ENCODE measurements at regions of chr6 and their contacts with region 1.

Region 1: GRCh38 chr6:118551063-118552053 is 3.3 kb downstream of the PLN start:
- DNase-seq: no peak
- ATAC-seq: peak; percentile 71 to 76 (median 74)
- H3K4me3 ChIP-seq: peak overlapping the region; percentile 68
- H3K27ac ChIP-seq: peak overlapping the region; percentile 87
- H3K4me1 ChIP-seq: peaks cover 39% of the 10 kb centered on the region
- H3K27me3 ChIP-seq: no peaks in the 10 kb centered on the region
- CTCF ChIP-seq: peak; percentile 63

Region 2: DNA sequence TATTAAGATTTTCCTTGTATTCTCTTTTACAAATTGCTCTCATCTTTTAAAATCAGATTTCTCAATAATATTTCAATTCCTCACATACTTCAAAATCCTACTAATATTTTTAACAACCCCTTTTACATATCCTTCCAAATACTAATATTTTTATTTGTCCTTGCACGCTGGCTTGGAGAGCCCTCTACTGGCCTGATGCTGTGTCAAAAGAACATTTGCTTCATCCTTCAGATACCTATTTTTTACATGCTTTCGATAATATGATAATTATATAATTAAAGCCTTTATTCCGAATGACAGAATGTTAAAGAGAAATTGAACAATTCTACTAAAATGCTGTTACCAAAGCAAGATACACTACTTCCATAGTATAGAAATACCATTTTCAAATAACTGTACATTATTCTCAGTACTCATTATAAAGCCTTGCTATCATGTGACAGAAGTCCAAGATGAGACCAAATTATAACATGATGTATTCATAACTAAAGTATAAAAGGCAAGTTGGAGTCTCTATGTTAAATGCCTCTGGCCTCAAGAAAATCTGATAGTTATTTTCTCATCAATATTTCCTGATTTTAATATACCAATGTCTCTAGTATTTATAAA is 42.2 kb before region 1 on chr6:
- intact Hi-C with region 1: loop called (anchors 5 kb)
- DNase-seq: no peak
- ATAC-seq: peak in 1 of 4 donors; percentile 43
- H3K4me3 ChIP-seq: peak overlapping the region; percentile 63
- H3K27ac ChIP-seq: peak overlapping the region; percentile 36
- H3K4me1 ChIP-seq: peaks cover 54% of the 10 kb centered on the region
- H3K27me3 ChIP-seq: no peaks in the 10 kb centered on the region
- CTCF ChIP-seq: peak; percentile 84

Region 3: GRCh38 chr6:118514689-118515088 is 36.7 kb before region 1 on chr6:
- intact Hi-C with region 1: loop called (anchors 5 kb)
- DNase-seq: peak; percentile 18 to 70
- ATAC-seq: peak; percentile 93 to 100 (median 100)
- H3K4me3 ChIP-seq: no peak overlapping the region
- H3K27ac ChIP-seq: peak overlapping the region; percentile 78
- H3K4me1 ChIP-seq: peaks cover 36% of the 10 kb centered on the region
- H3K27me3 ChIP-seq: no peaks in the 10 kb centered on the region
- CTCF ChIP-seq: no peak

Region 4: GRCh38 chr6:118934461-118935330 is 383.3 kb after region 1 on chr6 and contains the start of gene MCM9:
- intact Hi-C with region 1: no loop called
- DNase-seq: peak; percentile 92 to 94
- ATAC-seq: peak; percentile 96 to 98 (median 96)
- H3K4me3 ChIP-seq: peak within 1 kb of the TSS; percentile 77
- H3K27ac ChIP-seq: peak within 1 kb of the TSS; percentile 90
- H3K4me1 ChIP-seq: peaks cover 13% of the 10 kb centered on the region
- H3K27me3 ChIP-seq: no peaks in the 10 kb centered on the region
- CTCF ChIP-seq: no peak
- total RNA-seq, gene MCM9: 4.6 to 5.6 (median 5.0) TPM

Measured in psoas muscle (tissue), 8 donors.